ENCODE measurements at regions of chr9 and their contacts with region 1.

Region 1: GRCh38 chr9:20284601-20285289 is 337.6 kb downstream of the MLLT3 start:
- DNase-seq: no peak

Region 2: DNA sequence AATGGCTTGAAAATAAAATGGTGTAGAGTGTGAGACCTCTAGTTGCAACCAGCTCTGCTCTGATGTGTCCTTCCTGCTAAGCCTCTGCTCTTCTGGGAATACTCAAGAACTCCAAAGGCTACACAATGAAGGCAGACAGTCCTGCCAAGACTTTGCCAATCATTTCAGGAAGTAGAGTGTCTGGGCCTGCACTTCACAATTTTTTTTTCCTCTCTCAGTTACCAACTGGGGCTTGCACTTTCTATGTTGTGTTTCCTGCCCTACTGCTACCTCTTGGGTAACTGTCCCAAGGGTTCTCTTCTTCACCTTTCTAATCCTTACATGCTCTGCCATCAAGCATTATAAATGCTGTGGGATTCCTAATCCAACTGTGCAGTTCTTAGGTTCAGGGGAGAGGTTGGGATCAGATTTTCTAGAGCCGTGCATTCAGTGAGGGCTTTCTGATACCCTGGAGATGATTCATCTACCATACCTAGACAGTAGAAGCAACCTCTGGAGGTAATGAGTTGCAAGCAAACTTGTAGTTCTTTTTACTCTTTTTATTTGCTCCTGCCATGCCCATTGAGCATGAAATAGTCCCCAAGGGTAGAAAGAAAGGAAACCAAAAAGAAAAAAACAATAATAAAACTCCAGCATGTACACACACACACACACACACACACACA is 28.3 kb before region 1 on chr9:
- intact Hi-C with region 1: loop called in 1 of 2 experiments (anchors 1 kb)
- DNase-seq: no peak

Region 3: DNA sequence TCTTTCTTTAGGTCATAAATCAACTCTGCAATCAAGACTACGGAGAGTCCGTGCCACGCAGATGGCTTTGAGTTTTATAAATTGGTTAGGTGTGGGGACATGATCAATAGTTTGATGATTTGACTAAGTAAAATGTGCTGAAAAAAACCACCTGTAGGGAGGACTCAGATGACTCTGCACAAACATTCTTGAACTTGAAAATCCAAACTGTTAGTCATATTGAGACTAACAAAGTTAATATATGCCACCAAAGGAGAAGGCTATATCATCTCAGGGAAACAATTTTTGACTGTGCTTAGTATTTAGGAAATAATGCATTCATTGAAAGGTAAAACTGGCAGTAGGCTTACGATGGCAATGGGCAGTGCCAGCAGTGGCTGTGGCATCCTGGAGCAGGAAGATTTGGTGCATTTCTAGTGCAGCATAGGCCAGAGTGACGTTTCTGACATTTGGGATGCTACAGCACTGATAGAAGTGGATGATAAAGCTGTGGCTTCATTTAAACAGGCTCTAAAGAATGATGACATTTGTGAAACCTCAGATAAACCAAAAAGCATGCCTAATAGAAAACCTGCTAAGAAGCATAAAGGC is 46.4 kb after region 1 on chr9:
- intact Hi-C with region 1: no loop called
- DNase-seq: no peak